PC-3 (cell line): ENCODE measurements at regions of chr3 and their contacts with region 1.

Region 1: GRCh38 chr3:85110393-85110792 is 151.6 kb downstream of the CADM2 start:
- DNase-seq: peak; percentile 24
- ATAC-seq: peak; percentile 77
- H3K4me3 ChIP-seq: no peak overlapping the region
- H3K27ac ChIP-seq: no peak overlapping the region
- H3K4me1 ChIP-seq: no peaks in the 10 kb centered on the region
- H3K27me3 ChIP-seq: no peaks in the 10 kb centered on the region
- CTCF ChIP-seq: peak; percentile 57

Region 2: DNA sequence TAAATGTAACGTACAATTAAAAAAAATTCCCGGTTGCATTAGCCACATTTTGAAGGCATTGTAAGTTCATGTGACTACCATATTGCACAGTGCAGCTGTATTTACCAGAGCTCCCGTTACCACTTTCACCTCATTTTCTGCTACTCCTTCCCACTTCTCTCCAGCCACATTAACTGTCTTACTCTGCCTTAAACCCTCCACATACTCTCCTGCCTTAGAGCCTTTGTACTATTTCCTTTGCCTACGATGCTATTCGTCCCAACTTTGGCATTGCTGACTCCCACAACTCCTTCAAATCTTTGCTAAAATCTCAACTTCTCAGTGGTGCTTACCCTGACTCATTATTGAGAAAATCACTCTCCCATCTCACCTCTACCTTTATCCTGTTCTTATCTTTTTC is 36.4 kb before region 1 on chr3:
- CTCF ChIA-PET with region 1: no interaction called
- POLR2A ChIA-PET with region 1: no interaction called
- intact Hi-C with region 1: no loop called
- DNase-seq: no peak
- ATAC-seq: no peak
- H3K4me3 ChIP-seq: no peak overlapping the region
- H3K27ac ChIP-seq: no peak overlapping the region
- H3K4me1 ChIP-seq: no peaks in the 10 kb centered on the region
- H3K27me3 ChIP-seq: no peaks in the 10 kb centered on the region
- CTCF ChIP-seq: no peak

Region 3: DNA sequence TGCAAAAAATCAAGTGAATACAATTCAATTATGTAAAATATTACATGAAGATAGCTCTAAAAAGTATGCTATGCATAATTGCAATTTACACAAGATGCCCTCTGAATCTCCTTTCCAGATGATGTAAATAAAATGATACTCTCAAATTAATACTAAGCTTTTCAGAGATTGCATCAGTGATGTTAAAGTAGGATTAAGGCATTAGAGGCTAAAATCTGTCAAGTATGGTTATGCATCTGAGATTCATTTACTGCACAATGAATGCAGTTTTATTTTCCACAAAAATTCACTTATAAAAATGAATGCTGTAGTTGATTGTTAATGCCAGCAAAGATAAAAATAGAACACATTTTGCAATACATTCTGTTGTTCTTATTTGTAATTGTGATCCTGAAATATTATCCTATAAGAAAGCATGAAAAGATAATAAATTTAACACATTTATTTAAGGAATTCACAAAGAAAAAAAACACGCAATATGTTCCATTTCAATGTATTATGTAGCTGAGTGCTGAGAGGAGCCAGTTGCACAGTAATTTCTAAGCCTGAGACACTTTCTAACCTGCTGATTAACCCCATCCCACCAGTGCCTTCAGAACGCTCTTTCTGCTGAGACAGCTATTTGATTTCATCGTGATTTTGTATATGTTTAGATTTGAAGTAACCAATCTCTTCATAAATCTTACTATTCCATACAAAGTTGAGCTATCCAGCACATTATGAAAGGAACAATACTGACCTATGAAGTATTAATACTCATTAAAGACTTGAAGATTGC is 72.8 kb after region 1 on chr3:
- CTCF ChIA-PET with region 1: no interaction called
- POLR2A ChIA-PET with region 1: no interaction called
- intact Hi-C with region 1: no loop called
- DNase-seq: no peak
- ATAC-seq: no peak
- H3K4me3 ChIP-seq: no peak overlapping the region
- H3K27ac ChIP-seq: no peak overlapping the region
- H3K4me1 ChIP-seq: no peaks in the 10 kb centered on the region
- H3K27me3 ChIP-seq: no peaks in the 10 kb centered on the region
- CTCF ChIP-seq: no peak

Region 4: DNA sequence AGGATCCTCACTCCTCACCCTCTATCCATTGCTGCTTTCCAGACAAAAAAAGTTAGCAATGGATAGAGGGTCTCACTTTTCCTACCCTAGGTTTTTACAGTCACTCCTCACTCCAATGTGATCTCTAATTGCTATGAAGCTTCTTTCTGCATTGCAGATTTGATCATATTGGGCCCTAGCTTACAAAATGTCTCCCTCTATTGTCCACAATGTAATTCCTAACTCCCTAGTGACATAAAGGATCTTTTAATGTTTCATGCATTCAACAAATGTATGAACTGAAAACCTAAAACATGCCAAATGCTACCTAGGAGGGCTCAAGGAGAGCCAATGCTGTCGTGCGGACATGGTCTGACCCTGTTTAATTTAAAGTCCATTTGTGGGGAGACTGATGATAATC is 83.2 kb after region 1 on chr3:
- CTCF ChIA-PET with region 1: interaction called, 6 read pairs
- POLR2A ChIA-PET with region 1: no interaction called
- intact Hi-C with region 1: loop called (anchors 2 kb)
- DNase-seq: peak; percentile 52
- ATAC-seq: peak; percentile 55; the same call in 1 of the 2 replicates
- H3K4me3 ChIP-seq: no peak overlapping the region
- H3K27ac ChIP-seq: no peak overlapping the region
- H3K4me1 ChIP-seq: no peaks in the 10 kb centered on the region
- H3K27me3 ChIP-seq: no peaks in the 10 kb centered on the region
- CTCF ChIP-seq: peak; percentile 68

Region 5: GRCh38 chr3:85342915-85343314 is 232.5 kb after region 1 on chr3:
- CTCF ChIA-PET with region 1: no interaction called
- POLR2A ChIA-PET with region 1: no interaction called
- intact Hi-C with region 1: loop called (anchors 1 kb)
- DNase-seq: peak; percentile 69
- ATAC-seq: peak; percentile 87
- H3K4me3 ChIP-seq: no peak overlapping the region
- H3K27ac ChIP-seq: no peak overlapping the region
- H3K4me1 ChIP-seq: peaks cover 13% of the 10 kb centered on the region
- H3K27me3 ChIP-seq: no peaks in the 10 kb centered on the region
- CTCF ChIP-seq: peak; percentile 87

Region 6: GRCh38 chr3:85360742-85361387 is 250.5 kb after region 1 on chr3:
- CTCF ChIA-PET with region 1: interaction called, 9 read pairs
- POLR2A ChIA-PET with region 1: no interaction called
- intact Hi-C with region 1: loop called (anchors 1 kb)
- DNase-seq: peak; percentile 83
- ATAC-seq: peak; percentile 100
- H3K4me3 ChIP-seq: no peak overlapping the region
- H3K27ac ChIP-seq: no peak overlapping the region
- H3K4me1 ChIP-seq: no peaks in the 10 kb centered on the region
- H3K27me3 ChIP-seq: no peaks in the 10 kb centered on the region
- CTCF ChIP-seq: peak; percentile 94

Region 7: DNA sequence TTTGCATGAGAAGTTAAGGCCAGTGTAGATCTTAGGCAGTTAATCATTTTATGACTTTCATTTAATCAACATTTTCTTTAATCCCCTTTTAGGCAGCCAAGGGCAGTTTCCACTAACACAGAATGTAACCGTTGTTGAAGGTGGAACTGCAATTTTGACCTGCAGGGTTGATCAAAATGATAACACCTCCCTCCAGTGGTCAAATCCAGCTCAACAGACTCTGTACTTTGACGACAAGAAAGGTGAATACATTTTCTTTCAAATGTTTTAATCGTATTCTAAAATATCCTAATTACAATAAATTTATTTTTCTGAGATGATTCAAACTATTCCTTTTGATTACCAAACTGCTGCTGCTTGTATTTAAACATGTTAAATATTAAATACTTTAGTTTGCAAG is 691.6 kb after region 1 on chr3:
- CTCF ChIA-PET with region 1: no interaction called
- POLR2A ChIA-PET with region 1: no interaction called
- intact Hi-C with region 1: loop called (anchors 10 kb)
- DNase-seq: peak; percentile 80
- ATAC-seq: peak; percentile 95
- H3K4me3 ChIP-seq: no peak overlapping the region
- H3K27ac ChIP-seq: no peak overlapping the region
- H3K4me1 ChIP-seq: no peaks in the 10 kb centered on the region; the same call in 1 of the 2 replicates
- H3K27me3 ChIP-seq: no peaks in the 10 kb centered on the region
- CTCF ChIP-seq: peak; percentile 91